GM13976 (cell line): ENCODE measurements at regions of chr10 and their contacts with region 1.

Region 1: GRCh38 chr10:114103284-114103683 is 59.6 kb downstream of the ADRB1 start:
- DNase-seq: peak; percentile 72
- CTCF ChIP-seq: peak; percentile 58

Region 2: GRCh38 chr10:113802997-113803396 is 300.3 kb before region 1 on chr10:
- in situ Hi-C with region 1: loop called (anchors 5 kb)
- DNase-seq: no peak
- CTCF ChIP-seq: no peak

Region 3: GRCh38 chr10:113958631-113959382 is 144.5 kb before region 1 on chr10:
- in situ Hi-C with region 1: no loop called
- DNase-seq: peak; percentile 43
- CTCF ChIP-seq: no peak